HepG2 (cell line): ENCODE measurements at regions of chr12 and their contacts with region 1.

Region 1: DNA sequence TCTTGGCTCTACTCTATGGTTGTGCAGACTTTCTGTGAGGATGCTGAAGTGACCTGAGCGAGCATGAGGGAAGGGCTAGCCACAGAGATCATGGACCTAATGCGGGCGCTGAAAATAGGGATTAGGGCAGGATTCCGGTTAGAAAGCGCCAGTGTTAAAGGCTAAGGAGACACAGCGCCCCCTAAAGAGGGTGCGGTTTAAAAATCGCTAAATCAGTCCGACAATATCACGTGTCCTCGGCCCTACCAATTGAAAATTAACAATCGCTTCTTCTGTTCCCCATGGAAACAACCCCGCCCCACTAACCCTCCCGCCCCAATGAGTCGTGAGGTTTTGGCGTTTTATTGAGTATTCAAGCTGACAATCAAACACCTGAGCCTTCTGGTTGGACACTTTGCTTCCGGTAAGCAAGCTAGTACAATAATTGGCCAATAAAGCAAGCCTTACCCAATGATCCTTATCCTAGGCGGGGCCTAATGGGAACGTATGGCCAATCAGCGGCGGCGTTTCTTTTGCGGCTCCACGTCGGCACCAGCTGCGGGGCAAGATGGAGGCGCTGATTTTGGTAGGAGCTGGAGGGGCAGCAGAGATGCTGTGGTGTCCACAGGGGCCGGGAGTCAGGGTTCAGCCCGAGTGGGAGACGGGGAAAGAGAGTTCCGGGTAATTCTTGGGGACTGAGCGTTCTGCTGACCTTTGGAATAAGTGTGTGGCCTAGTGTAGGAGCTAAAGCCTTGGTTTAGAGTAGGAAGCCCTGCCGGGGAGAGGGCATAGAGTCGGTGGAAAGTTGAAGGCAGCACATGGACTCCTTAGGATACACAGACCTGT is at the start of gene COPZ1:
- DNase-seq: peak; percentile 100
- ATAC-seq: peak; percentile 95
- H3K4me3 ChIP-seq: peak within 1 kb of the TSS; percentile 82 to 84 (median 83)
- H3K27ac ChIP-seq: peak within 1 kb of the TSS; percentile 89
- H3K4me1 ChIP-seq: peaks cover 44% of the 10 kb centered on the region
- H3K27me3 ChIP-seq: no peaks in the 10 kb centered on the region; a peak in 1 of 5 replicates
- CTCF ChIP-seq: peak; percentile 90
- EP300 ChIP-seq: no peak
- POLR2A ChIP-seq: peak; percentile 78 to 96
- RAD21 ChIP-seq: peak; percentile 79
- total RNA-seq, gene COPZ1: 125 and 201 TPM in 2 replicates

Region 2: GRCh38 chr12:54279866-54280467 is 44.9 kb before region 1 on chr12 and contains the start of gene CBX5:
- CTCF ChIA-PET with region 1: no interaction called
- POLR2A ChIA-PET with region 1: interaction called, 87 read pairs
- in situ Hi-C with region 1: loop called (anchors 5 kb)
- intact Hi-C with region 1: loop called (anchors 1 kb)
- DNase-seq: peak; percentile 98
- ATAC-seq: peak; percentile 39
- H3K4me3 ChIP-seq: peak within 1 kb of the TSS; percentile 73 to 79 (median 76)
- H3K27ac ChIP-seq: peak within 1 kb of the TSS; percentile 96
- H3K4me1 ChIP-seq: peaks cover 64% of the 10 kb centered on the region
- H3K27me3 ChIP-seq: no peaks in the 10 kb centered on the region; a peak in 1 of 5 replicates
- CTCF ChIP-seq: no peak
- EP300 ChIP-seq: no peak
- POLR2A ChIP-seq: peak in 1 of 2 experiments; percentile 46; a peak in 2 of 4 replicates
- RAD21 ChIP-seq: 0 out of 2 replicates have a peak, but pooled peaks have one; percentile 19
- total RNA-seq, gene CBX5: 22.2 and 45.4 TPM in 2 replicates

Region 3: GRCh38 chr12:54294152-54294952 is 30.5 kb before region 1 on chr12:
- CTCF ChIA-PET with region 1: interaction called, 34 read pairs
- POLR2A ChIA-PET with region 1: interaction called, 73 read pairs
- in situ Hi-C with region 1: no loop called
- intact Hi-C with region 1: loop called (anchors 1 kb)
- DNase-seq: peak; percentile 89
- ATAC-seq: peak; percentile 60
- H3K4me3 ChIP-seq: peak overlapping the region in 2 of 3 experiments; percentile 26 to 64; a peak in 3 of 6 replicates
- H3K27ac ChIP-seq: peak overlapping the region; percentile 89
- H3K4me1 ChIP-seq: peaks cover 57% of the 10 kb centered on the region
- H3K27me3 ChIP-seq: no peaks in the 10 kb centered on the region
- CTCF ChIP-seq: peak; percentile 93
- EP300 ChIP-seq: peak; percentile 45 to 70; a peak in 3 of 4 replicates
- POLR2A ChIP-seq: peak; percentile 22 to 36; a peak in 2 of 4 replicates
- RAD21 ChIP-seq: peak; percentile 84

Region 4: DNA sequence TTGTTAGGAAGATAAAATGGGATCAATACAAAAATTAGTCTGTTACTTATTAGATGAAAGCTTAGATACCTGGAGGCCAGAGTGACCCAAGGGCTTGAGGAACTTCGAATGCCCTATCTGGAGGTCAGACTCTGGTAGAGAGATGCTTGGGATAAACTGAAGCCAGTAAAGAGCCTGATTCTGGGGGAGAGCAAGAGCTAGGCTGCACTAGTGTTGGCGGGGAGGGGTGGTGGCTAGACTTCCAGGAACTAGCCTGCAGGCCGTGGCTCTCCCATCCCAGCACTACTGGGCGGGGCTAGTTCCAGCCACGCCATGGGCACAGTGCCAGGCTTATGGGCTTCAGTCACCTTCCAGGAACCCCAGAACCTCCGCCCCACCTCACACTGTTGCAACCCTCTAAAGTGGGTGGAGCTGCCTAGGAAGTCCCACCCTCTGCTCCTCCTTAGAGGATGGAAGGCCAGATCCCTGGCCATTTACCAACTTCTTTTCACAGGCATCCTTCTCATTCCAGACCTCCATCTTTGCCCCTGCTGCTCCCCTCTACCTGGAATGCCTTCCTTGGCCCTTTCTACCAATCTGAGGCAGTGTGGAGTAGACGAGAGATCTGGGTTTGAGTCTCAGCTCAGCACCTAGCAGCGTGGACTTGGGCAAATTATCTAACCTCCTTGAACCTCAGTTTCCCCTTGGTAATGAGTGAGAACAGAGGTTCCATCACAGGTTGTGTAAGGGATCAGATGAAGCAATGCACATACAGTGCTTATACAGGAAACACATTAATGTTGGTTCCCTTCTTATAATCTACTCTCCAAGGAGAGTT is 17.7 kb before region 1 on chr12:
- CTCF ChIA-PET with region 1: no interaction called
- POLR2A ChIA-PET with region 1: interaction called, 44 read pairs
- in situ Hi-C with region 1: no loop called
- intact Hi-C with region 1: no loop called
- DNase-seq: peak; percentile 58
- ATAC-seq: peak; percentile 36
- H3K4me3 ChIP-seq: peak overlapping the region in 1 of 3 experiments; percentile 9; a peak in 1 of 6 replicates
- H3K27ac ChIP-seq: no peak overlapping the region
- H3K4me1 ChIP-seq: peaks cover 59% of the 10 kb centered on the region
- H3K27me3 ChIP-seq: no peaks in the 10 kb centered on the region
- CTCF ChIP-seq: no peak
- EP300 ChIP-seq: no peak
- POLR2A ChIP-seq: no peak
- RAD21 ChIP-seq: no peak

Region 5: DNA sequence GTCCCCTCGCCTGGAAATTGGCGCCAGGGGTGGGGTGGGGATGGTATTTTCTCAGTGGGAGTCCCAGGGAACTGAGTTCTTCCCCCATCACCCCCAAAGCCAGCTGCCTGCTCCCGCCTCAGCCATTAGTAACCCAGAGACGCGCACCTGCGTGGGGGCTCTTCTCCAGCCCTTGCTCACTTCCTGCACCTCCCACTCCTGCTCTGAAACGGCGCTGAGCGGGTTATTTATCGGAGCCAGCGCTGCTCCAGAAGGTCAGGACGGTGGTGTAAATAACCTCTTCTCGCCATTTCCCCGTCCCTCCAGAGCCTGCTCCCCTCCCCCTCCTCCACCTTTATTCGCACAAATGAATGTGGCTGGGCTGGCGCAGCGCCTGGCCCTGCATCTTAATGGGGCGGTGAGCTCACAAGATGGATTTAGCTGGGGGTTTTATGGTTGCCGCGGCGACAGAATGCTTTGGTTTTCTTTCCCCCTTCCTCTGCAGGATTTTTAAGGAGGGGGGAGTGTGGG is 27.2 kb after region 1 on chr12:
- CTCF ChIA-PET with region 1: no interaction called
- POLR2A ChIA-PET with region 1: interaction called, 22 read pairs
- in situ Hi-C with region 1: no loop called
- intact Hi-C with region 1: loop called (anchors 2 kb)
- DNase-seq: no peak
- ATAC-seq: no peak
- H3K4me3 ChIP-seq: no peak overlapping the region
- H3K27ac ChIP-seq: no peak overlapping the region
- H3K4me1 ChIP-seq: peaks cover 26% of the 10 kb centered on the region
- H3K27me3 ChIP-seq: no peaks in the 10 kb centered on the region
- CTCF ChIP-seq: no peak
- EP300 ChIP-seq: no peak
- POLR2A ChIP-seq: no peak
- RAD21 ChIP-seq: no peak